Heart right ventricle (tissue), 16 donors: ENCODE measurements at regions of chr1 and their contacts with region 1.

Region 1: GRCh38 chr1:112706908-112707663 is at the start of gene RHOC:
- DNase-seq: peak; percentile 88 to 92
- ATAC-seq: peak; percentile 63 to 88 (median 77)
- H3K4me3 ChIP-seq: peak within 1 kb of the TSS; percentile 89 to 100 (median 98)
- H3K27ac ChIP-seq: peak within 1 kb of the TSS; percentile 96 to 100 (median 99)
- H3K4me1 ChIP-seq: peaks cover 11 to 47% (median 44%) of the 10 kb centered on the region in 9 donors
- H3K27me3 ChIP-seq: no peaks in the 10 kb centered on the region
- CTCF ChIP-seq: peak; percentile 91 to 97 (median 95)
- total RNA-seq, gene RHOC: 115 to 225 (median 158) TPM

Region 2: DNA sequence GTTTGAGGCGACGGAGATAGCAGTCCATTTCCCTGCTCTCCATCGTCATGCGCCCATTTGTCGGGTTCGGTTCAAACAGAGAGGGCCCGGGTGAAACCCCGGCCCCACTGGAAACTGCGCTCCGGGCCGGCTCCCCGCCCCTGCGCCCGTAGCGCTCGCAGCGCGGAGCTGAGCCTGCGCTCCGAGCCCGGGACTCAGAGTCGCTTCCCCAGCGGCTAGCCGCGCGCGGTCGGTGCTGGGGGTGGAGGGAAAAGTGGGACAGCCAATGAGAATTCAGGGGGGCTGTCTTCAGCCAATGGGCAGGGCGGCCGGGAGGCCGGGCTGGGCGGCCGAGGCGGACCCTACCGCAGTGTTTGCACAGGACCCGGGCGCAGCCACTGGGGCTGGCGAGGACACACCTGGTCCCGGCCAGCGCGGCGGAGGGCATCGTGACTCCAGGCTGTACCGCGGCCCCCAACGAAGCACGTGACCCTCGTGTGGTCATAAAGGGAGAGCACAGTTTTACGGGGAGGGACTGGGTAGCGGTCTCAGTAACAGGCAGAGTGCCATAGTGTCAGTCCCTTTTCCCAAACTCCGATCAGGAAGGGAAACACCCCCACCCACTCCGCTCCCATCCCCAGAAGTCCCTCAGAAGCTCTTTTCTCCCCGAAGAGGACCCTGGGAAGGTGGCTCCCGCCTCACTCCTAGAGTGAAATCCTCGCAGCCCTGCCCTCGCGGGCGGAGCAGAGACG is 967.7 kb before region 1 on chr1 and contains the start of gene INKA2:
- intact Hi-C with region 1: loop called in 1 of 10 experiments (anchors 10 kb)
- DNase-seq: peak; percentile 94
- ATAC-seq: peak; percentile 84 to 93 (median 89)
- H3K4me3 ChIP-seq: peak within 1 kb of the TSS; percentile 66 to 80 (median 77)
- H3K27ac ChIP-seq: peak within 1 kb of the TSS; percentile 96 to 100 (median 98)
- H3K4me1 ChIP-seq: peaks cover 18 to 72% (median 68%) of the 10 kb centered on the region in 9 donors
- H3K27me3 ChIP-seq: peaks cover 0 to 32% (median 0%) of the 10 kb centered on the region in 7 donors
- CTCF ChIP-seq: peak in 1 of 9 donors; percentile 3
- total RNA-seq, gene INKA2: 8.7 to 34.6 (median 14.8) TPM

Region 3: DNA sequence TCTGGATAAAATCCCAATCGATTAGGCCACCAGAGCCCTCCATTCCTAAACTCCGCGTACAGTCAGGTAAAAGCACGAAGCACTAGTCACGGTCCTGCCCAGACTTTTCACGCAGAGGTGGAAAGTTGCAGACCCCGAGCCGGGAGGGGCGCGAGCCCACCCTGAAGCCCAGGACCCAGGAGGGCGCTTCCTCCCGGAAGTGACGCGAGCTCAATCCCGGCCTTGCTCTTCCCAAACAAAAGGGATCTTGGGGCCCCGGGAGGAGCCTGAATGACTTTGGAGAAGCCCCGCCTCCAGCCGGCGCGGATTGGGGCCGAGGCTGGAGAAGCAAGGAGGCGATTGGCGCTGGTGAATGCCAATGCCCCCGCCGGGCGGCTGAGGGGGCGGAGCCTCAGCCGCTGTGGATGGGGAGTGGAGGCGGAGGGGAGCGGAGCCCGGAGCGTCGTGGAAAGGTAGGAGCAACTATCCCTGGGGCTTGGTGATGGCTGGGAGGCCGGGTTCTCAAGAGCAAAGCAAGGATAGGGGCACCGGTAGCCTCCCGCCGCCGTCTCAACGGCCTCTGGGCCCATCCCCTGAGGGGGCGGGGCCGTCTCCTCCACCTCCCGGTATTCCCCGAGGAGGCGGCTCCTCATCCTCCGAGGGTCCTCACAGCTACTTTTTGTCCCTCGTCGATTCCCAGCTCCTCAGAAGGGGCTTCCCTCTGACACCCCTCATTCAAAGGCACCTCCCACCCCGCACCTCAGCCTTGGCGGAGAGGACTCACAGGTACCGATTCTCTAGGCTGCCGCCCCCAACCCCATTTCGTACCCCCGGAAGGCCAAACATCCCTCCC is 311.0 kb before region 1 on chr1 and contains the start of gene CTTNBP2NL:
- intact Hi-C with region 1: loop called in 8 of 10 experiments (anchors 2 to 5 kb)
- DNase-seq: peak; percentile 96 to 98
- ATAC-seq: peak; percentile 93 to 97 (median 95)
- H3K4me3 ChIP-seq: peak within 1 kb of the TSS; percentile 88 to 100 (median 94)
- H3K27ac ChIP-seq: peak within 1 kb of the TSS; percentile 88 to 97 (median 94)
- H3K4me1 ChIP-seq: peaks cover 0 to 91% (median 71%) of the 10 kb centered on the region in 9 donors
- H3K27me3 ChIP-seq: no peaks in the 10 kb centered on the region
- CTCF ChIP-seq: no peak
- total RNA-seq, gene CTTNBP2NL: 12.1 to 20.6 (median 17.5) TPM

Region 4: GRCh38 chr1:112418099-112418892 is 288.8 kb before region 1 on chr1:
- intact Hi-C with region 1: no loop called
- DNase-seq: no peak
- ATAC-seq: no peak
- H3K4me3 ChIP-seq: no peak overlapping the region
- H3K27ac ChIP-seq: no peak overlapping the region
- H3K4me1 ChIP-seq: peaks cover 0 to 14% (median 0%) of the 10 kb centered on the region in 9 donors
- H3K27me3 ChIP-seq: no peaks in the 10 kb centered on the region
- CTCF ChIP-seq: no peak

Region 5: GRCh38 chr1:112466078-112466660 is 240.9 kb before region 1 on chr1:
- intact Hi-C with region 1: loop called in 1 of 10 experiments (anchors 10 kb)
- DNase-seq: peak; percentile 94 to 97
- ATAC-seq: peak; percentile 93 to 98 (median 94)
- H3K4me3 ChIP-seq: peak overlapping the region in 9 of 10 donors; percentile 12 to 59 (median 49)
- H3K27ac ChIP-seq: peak overlapping the region; percentile 4 to 84 (median 74)
- H3K4me1 ChIP-seq: peaks cover 3 to 33% (median 18%) of the 10 kb centered on the region in 9 donors
- H3K27me3 ChIP-seq: no peaks in the 10 kb centered on the region
- CTCF ChIP-seq: peak; percentile 77 to 97 (median 90)

Region 6: DNA sequence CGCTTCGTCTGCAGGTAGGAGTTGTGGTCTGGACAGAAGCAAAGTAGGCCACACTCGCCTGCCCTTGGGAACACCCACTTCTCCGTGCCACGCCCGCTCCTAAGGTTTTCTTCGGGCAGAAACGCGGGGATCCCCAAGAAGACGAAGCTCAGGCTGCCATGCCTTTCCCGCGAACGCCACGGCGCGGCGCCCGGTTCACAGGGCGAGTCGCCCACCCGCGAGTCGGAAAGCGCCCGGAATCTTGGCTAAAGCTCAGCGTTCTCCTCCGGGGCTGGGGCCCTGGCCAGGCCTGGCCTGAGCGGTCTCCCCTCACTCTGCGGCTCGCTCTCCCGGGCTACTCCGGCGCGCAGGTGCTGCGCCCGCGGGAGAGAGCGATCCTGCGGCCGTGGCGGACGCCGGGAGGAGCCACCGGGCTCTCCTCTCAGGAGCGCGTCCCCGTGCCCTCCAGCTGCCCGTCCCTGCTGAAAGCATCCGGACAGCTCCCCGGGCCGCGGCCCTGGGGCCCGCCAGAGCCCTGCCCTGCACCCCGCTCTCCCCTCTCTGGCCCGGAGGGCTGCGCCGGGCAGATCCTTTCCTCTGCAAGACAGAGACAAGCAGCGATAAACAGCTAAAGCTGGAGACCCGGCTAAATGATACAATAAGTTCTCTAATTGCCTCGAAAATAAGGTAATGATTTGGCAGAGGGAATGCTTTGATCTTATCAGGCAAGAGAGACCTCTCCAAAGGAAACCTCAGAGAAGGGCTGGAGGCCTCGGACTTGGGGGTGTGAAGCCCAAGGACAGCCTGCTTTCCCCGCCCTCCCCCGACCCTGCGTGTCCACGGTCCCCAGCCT is 205.1 kb before region 1 on chr1:
- intact Hi-C with region 1: loop called in 6 of 10 experiments (anchors 5 to 10 kb)
- DNase-seq: peak; percentile 76 to 77
- ATAC-seq: peak; percentile 84 to 92 (median 90)
- H3K4me3 ChIP-seq: peak overlapping the region; percentile 35 to 73 (median 61)
- H3K27ac ChIP-seq: peak overlapping the region in 8 of 10 donors; percentile 14 to 79 (median 72)
- H3K4me1 ChIP-seq: peaks cover 0 to 27% (median 15%) of the 10 kb centered on the region in 9 donors
- H3K27me3 ChIP-seq: peaks cover 0 to 78% (median 4%) of the 10 kb centered on the region in 7 donors
- CTCF ChIP-seq: peak; percentile 62 to 84 (median 71)

Region 7: DNA sequence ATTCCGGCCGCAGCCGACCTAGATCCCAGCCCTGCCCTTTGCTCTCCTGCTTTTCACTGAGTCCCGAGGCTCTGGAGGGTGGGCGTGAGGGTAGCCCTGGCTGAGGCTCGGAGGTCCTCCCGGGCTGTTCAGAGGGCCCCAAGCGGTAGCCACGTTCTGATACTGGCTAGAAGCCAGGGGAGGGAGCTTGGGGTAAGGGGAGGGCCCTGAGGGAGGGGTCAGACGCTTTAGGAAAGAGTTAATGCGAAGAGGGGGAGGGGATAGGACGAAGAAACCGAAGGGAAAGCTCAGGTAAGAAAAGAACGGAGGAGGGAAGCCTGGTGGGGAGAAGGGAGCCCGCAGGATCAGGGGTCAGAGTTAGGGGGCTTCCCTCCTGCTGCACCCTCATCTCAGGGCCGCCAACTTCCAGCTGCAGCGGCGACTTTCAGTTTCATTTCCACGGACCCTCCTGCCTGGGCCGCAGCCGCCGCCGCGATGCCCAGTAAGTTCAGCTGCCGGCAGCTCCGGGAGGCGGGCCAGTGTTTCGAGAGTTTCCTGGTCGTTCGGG is 32.6 kb before region 1 on chr1 and contains the start of gene MOV10:
- intact Hi-C with region 1: loop called in 6 of 10 experiments (anchors 1 to 2 kb)
- DNase-seq: peak; percentile 73 to 76
- ATAC-seq: peak; percentile 73 to 84 (median 78)
- H3K4me3 ChIP-seq: peak within 1 kb of the TSS; percentile 67 to 92 (median 85)
- H3K27ac ChIP-seq: peak within 1 kb of the TSS; percentile 73 to 97 (median 93)
- H3K4me1 ChIP-seq: peaks cover 10 to 55% (median 30%) of the 10 kb centered on the region in 9 donors
- H3K27me3 ChIP-seq: no peaks in the 10 kb centered on the region
- CTCF ChIP-seq: no peak
- total RNA-seq, gene MOV10: 6.3 to 25.8 (median 13.9) TPM

Region 8: GRCh38 chr1:113133038-113133437 is 426.0 kb after region 1 on chr1:
- intact Hi-C with region 1: no loop called
- DNase-seq: no peak
- ATAC-seq: no peak
- H3K4me3 ChIP-seq: no peak overlapping the region
- H3K27ac ChIP-seq: no peak overlapping the region
- H3K4me1 ChIP-seq: peaks cover 0 to 8% (median 0%) of the 10 kb centered on the region in 9 donors
- H3K27me3 ChIP-seq: no peaks in the 10 kb centered on the region
- CTCF ChIP-seq: no peak